ENCODE measurements at regions of chr16 and their contacts with region 1.

Region 1: DNA sequence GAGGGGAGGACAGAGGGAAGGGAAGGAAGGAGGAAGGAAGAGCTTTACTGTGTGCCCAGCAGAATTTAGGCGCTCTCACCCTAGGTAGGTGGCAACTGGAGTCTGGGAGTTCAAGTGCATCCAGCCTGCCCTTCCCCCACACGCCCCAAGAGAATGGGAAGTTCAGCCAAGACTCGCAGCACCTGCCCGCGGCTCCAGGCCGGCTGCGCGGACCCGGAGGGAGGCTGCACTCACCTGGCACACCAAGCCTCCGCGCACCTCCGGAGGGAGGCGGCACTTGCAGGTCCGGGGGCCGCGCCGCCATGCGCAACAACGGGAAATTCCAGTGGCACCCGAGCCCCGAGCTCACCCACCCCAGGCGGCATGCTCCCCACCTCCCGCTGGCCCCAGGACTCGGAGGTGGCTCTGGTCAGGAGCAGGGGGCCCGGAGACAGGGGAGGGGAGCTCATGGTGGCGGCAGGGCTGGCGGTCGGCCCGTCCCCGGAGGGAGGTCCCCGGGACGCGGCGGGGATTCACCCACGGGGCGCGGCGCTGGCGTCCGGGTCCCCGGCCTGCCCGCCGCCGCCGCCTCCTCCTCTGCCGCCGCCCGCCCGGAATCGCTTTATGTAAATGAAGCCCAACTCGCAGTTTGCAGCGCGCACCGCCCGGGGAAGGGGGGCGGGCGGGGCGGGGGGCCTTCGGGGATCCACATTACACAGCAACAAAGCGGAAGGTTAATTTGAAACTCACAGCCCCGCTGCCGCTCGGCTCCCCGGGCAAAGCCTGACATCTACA is at the start of gene ZFHX3:
- DNase-seq: peak; percentile 87 to 89
- H3K4me3 ChIP-seq: peak within 1 kb of the TSS; percentile 92
- H3K4me3 Mint-ChIP-seq: peak within 1 kb of the TSS; percentile 73
- H3K27ac Mint-ChIP-seq: peak within 1 kb of the TSS; percentile 77
- H3K4me1 ChIP-seq: peaks cover 66% of the 10 kb centered on the region
- H3K4me1 Mint-ChIP-seq: peaks cover 37% of the 10 kb centered on the region
- H3K27me3 ChIP-seq: no peaks in the 10 kb centered on the region
- H3K27me3 Mint-ChIP-seq: no peaks in the 10 kb centered on the region
- CTCF ChIP-seq: peak in 1 of 2 experiments; percentile 34
- total RNA-seq, gene ZFHX3: 39.9 TPM in 2 replicates

Region 2: DNA sequence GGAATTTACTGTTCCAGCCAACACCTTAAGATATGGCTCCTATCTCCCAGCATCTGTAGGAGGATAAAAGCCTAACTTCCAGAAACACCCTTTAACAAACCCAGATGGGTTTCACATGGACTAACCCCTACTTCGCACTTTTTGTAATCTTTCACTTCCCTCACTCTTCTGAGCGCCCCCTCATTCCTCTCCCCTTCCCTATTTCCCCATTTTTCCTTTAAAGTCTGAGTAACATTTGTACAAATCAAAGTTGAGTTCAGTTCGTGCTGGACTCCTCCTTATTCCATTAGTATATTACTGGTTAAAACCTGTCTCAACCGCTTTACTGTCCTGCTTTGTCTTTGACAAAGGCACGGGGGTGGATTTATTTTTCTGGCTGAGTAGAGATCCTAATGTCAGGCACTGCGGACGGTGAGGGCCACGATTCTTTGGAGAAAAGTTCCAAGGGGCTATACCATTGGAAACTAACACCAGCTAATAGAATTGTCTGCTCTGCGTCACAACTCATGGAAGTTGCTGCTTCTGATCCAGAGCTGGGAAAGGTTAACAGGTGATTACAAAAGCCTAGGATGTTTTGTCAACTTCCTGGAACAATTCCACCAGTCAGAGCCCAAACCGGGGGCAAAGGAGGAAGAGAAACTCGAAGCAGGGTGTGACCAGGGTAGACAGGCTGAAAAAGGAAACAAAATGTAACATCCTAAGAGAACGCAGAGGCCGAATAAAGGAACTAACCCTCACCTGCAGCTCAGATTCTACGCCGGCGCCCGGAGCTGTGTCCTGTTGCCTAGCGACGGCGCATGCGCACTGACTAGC is 1483.3 kb before region 1 on chr16:
- CTCF ChIA-PET with region 1: no interaction called
- POLR2A ChIA-PET with region 1: interaction called, 15 read pairs
- intact Hi-C with region 1: no loop called
- DNase-seq: no peak
- H3K4me3 ChIP-seq: peak overlapping the region; percentile 44
- H3K4me3 Mint-ChIP-seq: peak overlapping the region; percentile 94
- H3K27ac Mint-ChIP-seq: peak overlapping the region; percentile 97
- H3K4me1 ChIP-seq: peaks cover 8% of the 10 kb centered on the region; the same call in 1 of the 2 replicates
- H3K4me1 Mint-ChIP-seq: peaks cover 20% of the 10 kb centered on the region
- H3K27me3 ChIP-seq: no peaks in the 10 kb centered on the region
- H3K27me3 Mint-ChIP-seq: no peaks in the 10 kb centered on the region
- CTCF ChIP-seq: no peak

Region 3: GRCh38 chr16:72876221-72876620 is 171.5 kb before region 1 on chr16:
- CTCF ChIA-PET with region 1: no interaction called
- POLR2A ChIA-PET with region 1: no interaction called
- intact Hi-C with region 1: loop called (anchors 1 kb)
- DNase-seq: no peak
- H3K4me3 ChIP-seq: no peak overlapping the region
- H3K4me3 Mint-ChIP-seq: peak overlapping the region; percentile 73
- H3K27ac Mint-ChIP-seq: peak overlapping the region; percentile 100
- H3K4me1 ChIP-seq: peaks cover 50% of the 10 kb centered on the region
- H3K4me1 Mint-ChIP-seq: peaks cover 58% of the 10 kb centered on the region
- H3K27me3 ChIP-seq: no peaks in the 10 kb centered on the region
- H3K27me3 Mint-ChIP-seq: no peaks in the 10 kb centered on the region
- CTCF ChIP-seq: no peak

Region 4: DNA sequence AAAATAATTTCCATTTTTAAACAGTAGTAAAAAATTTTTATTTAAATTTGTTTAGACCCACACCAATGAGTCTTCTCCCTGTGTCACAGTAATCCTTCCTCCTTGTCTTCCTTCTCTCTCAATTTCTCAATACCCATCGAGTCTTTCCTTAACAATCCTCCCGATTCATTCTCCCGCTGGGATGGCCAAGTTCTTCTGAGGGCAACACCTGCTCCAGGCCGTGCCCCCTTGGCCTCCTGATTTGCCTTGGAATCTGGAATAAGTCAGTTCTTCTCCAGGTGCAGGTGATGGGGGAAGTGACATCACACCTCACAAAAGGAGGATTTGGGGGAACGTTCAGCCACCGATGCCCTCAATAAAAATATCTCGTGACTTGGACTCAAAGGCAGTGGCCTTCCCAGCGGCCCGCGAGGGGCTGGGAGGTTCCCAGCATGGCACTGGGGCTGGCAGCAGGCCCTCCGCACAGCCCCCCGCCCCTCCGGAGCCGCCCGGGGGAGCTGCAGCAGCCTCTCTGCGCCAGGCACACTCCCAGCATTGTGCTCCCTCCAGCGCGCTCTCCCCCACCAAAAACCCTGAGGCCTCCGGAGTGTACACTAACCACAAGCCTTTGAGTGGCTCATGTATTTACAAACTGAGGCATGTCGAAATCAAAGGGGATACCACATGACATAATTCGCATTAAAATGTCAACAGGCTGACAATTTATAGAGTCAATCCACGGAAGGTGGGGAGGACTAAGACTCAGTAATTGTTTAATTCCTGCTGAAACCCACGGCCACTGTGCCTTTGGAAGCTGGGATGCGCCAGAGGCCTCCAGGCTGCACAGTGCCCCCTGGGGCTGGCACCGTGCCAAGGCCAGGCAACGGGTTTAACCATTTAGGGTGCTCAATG is 120.3 kb before region 1 on chr16:
- CTCF ChIA-PET with region 1: no interaction called
- POLR2A ChIA-PET with region 1: no interaction called
- intact Hi-C with region 1: no loop called
- DNase-seq: no peak
- H3K4me3 ChIP-seq: no peak overlapping the region
- H3K4me3 Mint-ChIP-seq: no peak overlapping the region
- H3K27ac Mint-ChIP-seq: peak overlapping the region; percentile 28
- H3K4me1 ChIP-seq: peaks cover 17% of the 10 kb centered on the region
- H3K4me1 Mint-ChIP-seq: peaks cover 46% of the 10 kb centered on the region
- H3K27me3 ChIP-seq: no peaks in the 10 kb centered on the region
- H3K27me3 Mint-ChIP-seq: no peaks in the 10 kb centered on the region
- CTCF ChIP-seq: peak in 1 of 2 experiments; percentile 14

Region 5: DNA sequence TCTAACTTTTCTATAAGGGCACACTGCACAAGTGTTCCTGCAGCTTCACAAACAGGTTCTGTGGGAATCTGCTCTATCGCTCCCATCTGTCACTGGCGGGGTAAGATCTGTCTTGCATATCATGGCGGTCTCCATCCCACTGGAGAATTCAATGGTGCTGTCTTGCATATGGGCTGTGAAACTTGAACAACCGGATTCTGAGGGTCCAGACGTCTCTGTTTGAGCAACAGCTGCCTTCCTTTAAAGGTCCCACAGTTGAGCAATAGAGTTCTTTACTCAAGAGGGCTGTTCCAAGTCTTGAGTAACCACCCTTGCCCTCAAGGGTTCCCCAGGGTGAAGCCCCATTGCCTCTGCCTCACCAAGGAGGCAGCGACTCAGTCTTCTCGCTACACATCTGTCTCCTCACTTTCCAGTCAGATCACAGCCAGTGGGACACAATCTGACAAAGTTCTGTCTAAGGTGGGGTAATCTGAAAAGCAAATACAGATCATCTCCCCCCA is 50.5 kb before region 1 on chr16:
- CTCF ChIA-PET with region 1: interaction called, 5 read pairs
- POLR2A ChIA-PET with region 1: no interaction called
- intact Hi-C with region 1: loop called (anchors 2 kb)
- DNase-seq: peak; percentile 93 to 96
- H3K4me3 ChIP-seq: 0 out of 2 replicates have a peak overlapping the region, but pooled peaks have one; percentile 1
- H3K4me3 Mint-ChIP-seq: peak overlapping the region; percentile 59
- H3K27ac Mint-ChIP-seq: peak overlapping the region; percentile 86
- H3K4me1 ChIP-seq: peaks cover 91% of the 10 kb centered on the region
- H3K4me1 Mint-ChIP-seq: peaks cover 80% of the 10 kb centered on the region
- H3K27me3 ChIP-seq: no peaks in the 10 kb centered on the region
- H3K27me3 Mint-ChIP-seq: no peaks in the 10 kb centered on the region
- CTCF ChIP-seq: no peak

Region 6: DNA sequence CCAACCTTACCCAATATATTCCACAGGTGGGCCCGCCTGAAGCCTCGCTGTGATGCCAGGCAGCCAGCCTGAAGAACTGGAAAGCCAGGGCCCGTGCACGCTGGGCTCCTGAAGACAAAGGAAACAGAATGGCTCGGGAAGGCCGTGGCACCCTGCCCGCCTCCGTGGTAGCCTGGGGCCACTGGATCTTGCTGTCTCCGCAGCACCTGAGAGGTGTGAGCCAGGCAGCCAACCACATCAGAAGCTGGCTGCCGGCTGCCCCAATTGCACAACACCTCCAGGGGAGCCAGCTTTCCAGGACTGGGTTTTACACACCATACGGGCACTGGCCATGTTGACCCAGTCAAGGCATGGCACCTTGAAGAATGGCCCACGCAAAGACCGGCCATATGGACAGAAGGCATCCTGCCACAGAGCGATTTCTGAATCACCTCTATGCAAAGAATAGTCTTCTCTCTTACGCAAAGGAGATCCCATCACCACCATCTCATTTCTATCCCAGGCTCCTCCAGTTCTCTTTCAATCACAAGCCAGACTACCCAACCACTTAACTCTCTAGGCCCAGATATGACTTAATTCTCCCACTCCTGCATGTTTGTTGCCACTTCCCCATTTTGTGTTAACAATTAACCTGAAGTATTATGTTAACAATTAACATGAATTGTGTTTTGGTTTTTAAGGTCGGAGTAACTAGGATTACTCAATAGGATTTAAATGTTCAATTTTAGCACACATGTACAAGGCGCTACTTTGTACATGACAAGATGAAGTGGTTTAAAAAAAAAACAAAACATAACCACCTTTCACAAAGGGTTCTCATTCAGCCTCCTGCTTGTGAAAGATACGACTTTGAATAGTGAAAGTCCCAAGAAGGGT is 31.9 kb before region 1 on chr16:
- CTCF ChIA-PET with region 1: no interaction called
- POLR2A ChIA-PET with region 1: no interaction called
- intact Hi-C with region 1: loop called (anchors 1 kb)
- DNase-seq: no peak
- H3K4me3 ChIP-seq: no peak overlapping the region
- H3K4me3 Mint-ChIP-seq: peak overlapping the region; percentile 6
- H3K27ac Mint-ChIP-seq: peak overlapping the region; percentile 7
- H3K4me1 ChIP-seq: peaks cover 40% of the 10 kb centered on the region
- H3K4me1 Mint-ChIP-seq: peaks cover 34% of the 10 kb centered on the region
- H3K27me3 ChIP-seq: no peaks in the 10 kb centered on the region
- H3K27me3 Mint-ChIP-seq: no peaks in the 10 kb centered on the region
- CTCF ChIP-seq: no peak

Region 7: DNA sequence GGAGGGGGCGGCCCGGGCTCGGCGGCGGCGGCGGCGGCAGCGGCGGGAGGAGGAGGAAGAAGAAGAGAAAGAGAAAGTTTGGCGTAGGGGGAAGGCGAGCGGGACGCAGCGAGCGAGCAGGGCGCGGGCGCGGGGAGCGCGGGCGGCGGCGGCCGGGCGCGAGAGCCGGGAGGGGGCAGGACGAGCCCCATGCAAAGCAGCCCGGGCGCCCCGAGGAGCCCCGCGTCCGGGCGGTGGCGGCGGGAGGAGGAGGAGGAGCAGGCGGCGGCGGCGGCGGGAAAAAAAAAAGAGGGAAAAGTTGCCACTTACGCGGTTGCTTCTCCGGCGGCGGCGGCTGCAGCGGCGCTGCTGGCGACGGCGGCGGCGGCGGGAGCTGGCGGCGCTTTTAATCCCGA is 10.5 kb after region 1 on chr16:
- CTCF ChIA-PET with region 1: no interaction called
- POLR2A ChIA-PET with region 1: interaction called, 11 read pairs
- intact Hi-C with region 1: loop called (anchors 1 kb)
- DNase-seq: peak; percentile 63 to 78
- H3K4me3 ChIP-seq: peak overlapping the region; percentile 58
- H3K4me3 Mint-ChIP-seq: peak overlapping the region; percentile 91
- H3K27ac Mint-ChIP-seq: no peak overlapping the region
- H3K4me1 ChIP-seq: peaks cover 42% of the 10 kb centered on the region
- H3K4me1 Mint-ChIP-seq: peaks cover 52% of the 10 kb centered on the region
- H3K27me3 ChIP-seq: no peaks in the 10 kb centered on the region
- H3K27me3 Mint-ChIP-seq: no peaks in the 10 kb centered on the region
- CTCF ChIP-seq: no peak

Region 8: DNA sequence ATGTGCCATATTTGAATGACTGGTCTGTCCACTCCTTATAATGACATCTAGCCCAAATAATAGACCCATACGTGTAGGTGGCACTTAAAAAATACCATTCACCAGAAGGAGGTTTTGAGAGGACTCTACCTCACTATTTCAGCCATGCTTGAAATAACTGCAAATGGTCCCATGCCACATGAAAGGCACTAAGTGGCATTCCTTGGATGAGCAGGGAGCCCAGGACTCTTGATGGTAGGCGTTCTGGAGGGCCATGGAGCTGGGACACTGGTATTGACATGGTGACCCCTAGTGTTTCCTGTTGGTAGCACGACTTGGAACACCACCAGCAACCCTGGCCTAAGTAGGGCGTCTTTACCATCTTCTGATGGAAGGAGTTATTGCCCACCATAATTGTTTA is 149.0 kb after region 1 on chr16:
- CTCF ChIA-PET with region 1: no interaction called
- POLR2A ChIA-PET with region 1: no interaction called
- intact Hi-C with region 1: loop called (anchors 5 kb)
- DNase-seq: peak; percentile 66 to 73
- H3K4me3 ChIP-seq: no peak overlapping the region
- H3K4me3 Mint-ChIP-seq: no peak overlapping the region
- H3K27ac Mint-ChIP-seq: no peak overlapping the region
- H3K4me1 ChIP-seq: no peaks in the 10 kb centered on the region
- H3K4me1 Mint-ChIP-seq: no peaks in the 10 kb centered on the region
- H3K27me3 ChIP-seq: no peaks in the 10 kb centered on the region
- H3K27me3 Mint-ChIP-seq: no peaks in the 10 kb centered on the region
- CTCF ChIP-seq: peak; percentile 71 to 74